Activated CD4-positive, alpha-beta memory T cell treated with anti-CD3 and anti-CD28 coated beads for 36 hours (primary cell): ENCODE measurements at regions of chr1 and their contacts with region 1.

Region 1: GRCh38 chr1:219416594-219417238 is 196.2 kb downstream of the ZC3H11B start:
- DNase-seq: peak; percentile 70
- H3K4me3 Mint-ChIP-seq: no peak overlapping the region
- H3K27ac Mint-ChIP-seq: no peak overlapping the region
- H3K4me1 Mint-ChIP-seq: no peaks in the 10 kb centered on the region
- H3K27me3 Mint-ChIP-seq: peaks cover 2% of the 10 kb centered on the region

Region 2: DNA sequence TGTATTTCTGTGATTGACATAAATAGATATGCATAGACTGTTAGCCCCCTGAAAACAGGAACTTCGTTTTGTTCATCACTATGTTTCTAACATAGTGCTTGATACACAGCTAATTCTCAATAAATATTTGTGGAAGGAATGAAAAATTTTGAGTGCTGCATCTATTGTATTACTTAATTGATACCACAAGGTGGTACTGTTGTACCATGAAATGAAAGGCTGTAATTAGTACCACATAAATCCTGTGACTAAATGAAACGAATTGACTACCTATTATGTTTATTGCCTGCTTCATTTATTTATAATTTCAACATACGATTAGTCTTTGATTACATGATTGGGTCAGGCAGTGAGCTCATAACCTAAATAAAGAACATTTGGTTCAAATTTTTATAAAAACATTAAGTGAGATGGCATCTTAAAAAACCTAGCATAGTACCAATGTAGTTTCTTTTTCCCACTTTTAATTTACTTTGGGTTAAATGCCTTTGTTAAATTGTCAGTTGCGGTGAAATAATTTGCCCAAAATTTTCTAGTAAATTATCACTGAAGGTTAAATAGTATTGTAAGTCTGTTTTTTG is 1086.6 kb before region 1 on chr1:
- CTCF ChIA-PET with region 1: no interaction called
- POLR2A ChIA-PET with region 1: no interaction called
- intact Hi-C with region 1: loop called (anchors 1 kb)
- DNase-seq: no peak
- H3K4me3 Mint-ChIP-seq: no peak overlapping the region
- H3K27ac Mint-ChIP-seq: no peak overlapping the region
- H3K4me1 Mint-ChIP-seq: no peaks in the 10 kb centered on the region
- H3K27me3 Mint-ChIP-seq: no peaks in the 10 kb centered on the region

Region 3: DNA sequence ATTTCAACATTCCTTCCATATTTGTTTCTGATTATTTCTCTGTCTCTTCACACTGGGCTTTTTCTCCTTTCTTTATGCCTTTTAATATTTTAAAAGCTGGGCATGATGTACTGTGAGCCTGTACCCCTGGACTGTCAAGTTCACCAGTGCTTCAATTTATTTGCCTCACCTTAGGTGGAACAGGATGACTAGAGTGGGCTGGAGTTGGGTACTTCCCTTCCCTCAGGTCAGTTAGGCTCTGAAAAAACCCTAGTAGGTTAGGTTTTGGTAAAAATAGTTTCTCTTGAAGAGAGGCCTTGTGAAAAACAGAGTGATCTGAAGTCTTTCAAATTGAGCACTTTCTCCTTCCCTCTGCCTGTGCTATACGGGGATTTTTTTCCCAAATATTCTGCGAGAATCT is 406.0 kb before region 1 on chr1:
- CTCF ChIA-PET with region 1: no interaction called
- POLR2A ChIA-PET with region 1: no interaction called
- intact Hi-C with region 1: loop called (anchors 10 kb)
- DNase-seq: no peak
- H3K4me3 Mint-ChIP-seq: no peak overlapping the region
- H3K27ac Mint-ChIP-seq: no peak overlapping the region
- H3K4me1 Mint-ChIP-seq: no peaks in the 10 kb centered on the region
- H3K27me3 Mint-ChIP-seq: no peaks in the 10 kb centered on the region

Region 4: DNA sequence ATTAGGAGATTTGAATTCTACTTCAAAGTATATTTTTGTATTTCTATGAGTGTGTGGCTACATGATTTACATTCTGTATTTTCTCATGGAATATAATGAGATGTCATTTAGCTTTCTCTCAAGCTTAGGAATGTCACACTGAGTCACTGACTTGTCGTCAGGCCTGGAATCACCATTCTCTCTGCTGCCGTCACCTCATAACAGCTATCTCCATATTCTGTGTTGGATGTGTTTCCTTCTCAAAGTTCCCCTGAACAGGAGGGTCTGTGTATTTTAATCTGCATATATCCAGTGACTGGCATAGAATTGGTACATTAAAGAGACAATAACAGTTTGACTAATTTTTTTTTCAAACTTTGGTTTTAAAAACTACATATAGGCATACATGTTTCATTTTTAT is 207.1 kb before region 1 on chr1:
- CTCF ChIA-PET with region 1: no interaction called
- POLR2A ChIA-PET with region 1: no interaction called
- intact Hi-C with region 1: loop called (anchors 2 kb)
- DNase-seq: no peak
- H3K4me3 Mint-ChIP-seq: no peak overlapping the region
- H3K27ac Mint-ChIP-seq: no peak overlapping the region
- H3K4me1 Mint-ChIP-seq: no peaks in the 10 kb centered on the region
- H3K27me3 Mint-ChIP-seq: no peaks in the 10 kb centered on the region

Region 5: GRCh38 chr1:219480011-219480410 is 63.3 kb after region 1 on chr1:
- CTCF ChIA-PET with region 1: no interaction called
- POLR2A ChIA-PET with region 1: no interaction called
- intact Hi-C with region 1: no loop called
- DNase-seq: no peak
- H3K4me3 Mint-ChIP-seq: no peak overlapping the region
- H3K27ac Mint-ChIP-seq: no peak overlapping the region
- H3K4me1 Mint-ChIP-seq: no peaks in the 10 kb centered on the region
- H3K27me3 Mint-ChIP-seq: no peaks in the 10 kb centered on the region